ENCODE measurements at regions of chr1 and their contacts with region 1.

Region 1: GRCh38 chr1:117905020-117905419 is 24.4 kb downstream of the GDAP2 start:
- DNase-seq: no peak
- ATAC-seq: no peak
- H3K4me3 ChIP-seq: no peak overlapping the region
- H3K27ac ChIP-seq: no peak overlapping the region
- H3K4me1 ChIP-seq: peaks cover 0 to 8% (median 0%) of the 10 kb centered on the region in 3 donors
- H3K27me3 ChIP-seq: no peaks in the 10 kb centered on the region
- CTCF ChIP-seq: no peak

Region 2: DNA sequence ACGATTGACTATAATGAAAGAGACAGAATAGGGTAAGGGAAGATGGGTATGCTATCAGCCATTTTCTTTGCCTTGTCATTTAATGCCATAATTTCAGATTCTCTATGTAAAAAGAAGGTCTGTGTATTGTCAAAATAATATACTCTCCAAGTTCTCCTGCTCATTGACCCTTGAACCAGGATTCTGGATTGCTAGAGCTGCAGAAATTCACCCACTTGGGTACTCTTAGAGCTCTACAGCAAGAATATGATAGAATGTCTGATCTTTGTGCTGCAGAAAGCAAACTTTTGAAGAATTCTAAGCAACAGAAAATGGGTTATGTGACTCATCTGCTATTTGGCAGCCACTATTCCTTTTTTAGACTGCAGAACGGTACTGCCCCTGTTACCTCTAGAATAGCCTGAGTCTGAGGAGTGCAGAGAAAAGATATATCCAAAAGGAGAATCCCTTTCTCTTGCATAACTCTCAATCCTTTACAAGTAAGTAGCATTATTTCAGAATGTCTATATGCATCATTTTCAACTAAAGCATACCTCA is 377.4 kb before region 1 on chr1:
- intact Hi-C with region 1: loop called in 1 of 3 experiments (anchors 10 kb)
- DNase-seq: no peak
- ATAC-seq: peak in 2 of 4 donors; percentile 34 to 62
- H3K4me3 ChIP-seq: no peak overlapping the region
- H3K27ac ChIP-seq: peak overlapping the region in 1 of 4 donors; percentile 2
- H3K4me1 ChIP-seq: peaks cover 0 to 7% (median 6%) of the 10 kb centered on the region in 3 donors
- H3K27me3 ChIP-seq: no peaks in the 10 kb centered on the region
- CTCF ChIP-seq: no peak